ENCODE measurements at regions of chr19 and their contacts with region 1.

Region 1: GRCh38 chr19:19145684-19146608 is 7.7 kb upstream of the TMEM161A start:
- DNase-seq: peak; percentile 75 to 90
- H3K4me3 ChIP-seq: no peak overlapping the region
- H3K4me3 Mint-ChIP-seq: no peak overlapping the region
- H3K27ac Mint-ChIP-seq: no peak overlapping the region
- H3K4me1 ChIP-seq: no peaks in the 10 kb centered on the region
- H3K4me1 Mint-ChIP-seq: no peaks in the 10 kb centered on the region
- H3K27me3 ChIP-seq: no peaks in the 10 kb centered on the region
- H3K27me3 Mint-ChIP-seq: no peaks in the 10 kb centered on the region
- CTCF ChIP-seq: peak; percentile 93 to 96

Region 2: GRCh38 chr19:19170053-19170872 is 24.3 kb after region 1 on chr19 and contains the start of gene MEF2B:
- CTCF ChIA-PET with region 1: interaction called, 3 read pairs
- POLR2A ChIA-PET with region 1: no interaction called
- intact Hi-C with region 1: loop called (anchors 1 kb)
- DNase-seq: peak; percentile 88 to 91
- H3K4me3 ChIP-seq: peak within 1 kb of the TSS; percentile 27
- H3K4me3 Mint-ChIP-seq: peak within 1 kb of the TSS; percentile 59
- H3K27ac Mint-ChIP-seq: no peak within 1 kb of the TSS
- H3K4me1 ChIP-seq: no peaks in the 10 kb centered on the region; the same call in 1 of the 2 replicates
- H3K4me1 Mint-ChIP-seq: peaks cover 21% of the 10 kb centered on the region
- H3K27me3 ChIP-seq: no peaks in the 10 kb centered on the region
- H3K27me3 Mint-ChIP-seq: peaks cover 3% of the 10 kb centered on the region
- CTCF ChIP-seq: no peak
- total RNA-seq, gene MEF2B: 0.82 and 1.5 TPM in 2 replicates

Region 3: DNA sequence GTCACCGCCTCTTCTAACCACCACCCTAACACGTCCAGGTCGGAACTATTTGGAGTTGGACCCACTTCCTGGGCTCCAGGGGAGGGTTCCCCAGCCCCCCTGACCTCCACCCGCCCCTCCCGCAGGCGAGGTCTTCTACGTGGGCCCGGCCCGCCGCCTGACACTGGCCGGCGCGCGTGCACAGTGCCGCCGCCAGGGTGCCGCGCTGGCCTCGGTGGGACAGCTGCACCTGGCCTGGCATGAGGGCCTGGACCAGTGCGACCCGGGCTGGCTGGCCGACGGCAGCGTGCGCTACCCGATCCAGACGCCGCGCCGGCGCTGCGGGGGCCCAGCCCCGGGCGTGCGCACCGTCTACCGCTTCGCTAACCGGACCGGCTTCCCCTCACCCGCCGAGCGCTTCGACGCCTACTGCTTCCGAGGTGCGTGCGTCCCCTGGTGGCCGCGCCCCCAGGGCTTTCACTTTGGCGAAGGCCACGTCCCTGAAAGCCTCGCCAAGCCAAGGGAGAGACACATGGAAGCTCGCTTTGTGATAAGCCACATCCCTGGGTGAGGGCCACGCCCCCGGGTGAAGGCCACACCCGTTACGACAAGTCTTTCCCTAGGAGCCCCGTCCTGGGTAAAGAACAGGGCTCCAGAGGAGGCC is 79.0 kb after region 1 on chr19:
- CTCF ChIA-PET with region 1: no interaction called
- POLR2A ChIA-PET with region 1: no interaction called
- intact Hi-C with region 1: loop called (anchors 2 kb)
- DNase-seq: peak; percentile 85 to 87
- H3K4me3 ChIP-seq: peak overlapping the region; percentile 40
- H3K4me3 Mint-ChIP-seq: peak overlapping the region; percentile 66
- H3K27ac Mint-ChIP-seq: no peak overlapping the region
- H3K4me1 ChIP-seq: no peaks in the 10 kb centered on the region
- H3K4me1 Mint-ChIP-seq: no peaks in the 10 kb centered on the region
- H3K27me3 ChIP-seq: no peaks in the 10 kb centered on the region
- H3K27me3 Mint-ChIP-seq: peaks cover 12% of the 10 kb centered on the region
- CTCF ChIP-seq: peak in 1 of 2 experiments; percentile 91

Region 4: GRCh38 chr19:19342756-19343322 is 196.9 kb after region 1 on chr19:
- CTCF ChIA-PET with region 1: interaction called, 7 read pairs
- POLR2A ChIA-PET with region 1: no interaction called
- intact Hi-C with region 1: loop called (anchors 1 kb)
- DNase-seq: peak; percentile 69 to 85
- H3K4me3 ChIP-seq: no peak overlapping the region
- H3K4me3 Mint-ChIP-seq: no peak overlapping the region
- H3K27ac Mint-ChIP-seq: no peak overlapping the region
- H3K4me1 ChIP-seq: no peaks in the 10 kb centered on the region
- H3K4me1 Mint-ChIP-seq: no peaks in the 10 kb centered on the region
- H3K27me3 ChIP-seq: no peaks in the 10 kb centered on the region
- H3K27me3 Mint-ChIP-seq: no peaks in the 10 kb centered on the region
- CTCF ChIP-seq: peak; percentile 80 to 87

Region 5: DNA sequence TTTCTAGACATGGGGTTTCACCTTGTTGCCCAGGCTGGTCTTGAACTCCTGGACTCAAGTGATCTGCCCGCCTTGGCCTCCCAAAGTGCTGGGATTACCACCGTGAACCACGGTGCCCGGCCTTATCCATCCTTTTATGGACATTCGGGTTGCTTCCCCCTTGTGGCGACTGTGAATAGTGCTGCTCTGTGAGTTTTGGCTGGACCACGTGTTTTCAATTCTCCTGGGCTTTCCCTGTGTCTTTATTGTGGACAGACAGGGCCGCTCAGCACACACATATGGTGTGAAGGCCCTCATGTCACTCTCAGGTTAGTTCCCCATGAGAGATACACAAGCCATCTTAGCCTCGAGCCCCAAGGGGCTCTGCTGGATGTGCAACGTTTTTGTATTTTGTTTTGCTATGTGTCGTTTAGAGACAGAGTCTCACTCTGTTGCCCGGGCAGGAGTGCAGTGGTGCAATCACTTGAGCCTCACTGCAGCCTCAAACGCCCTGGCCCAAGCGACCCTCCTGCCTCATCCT is 215.2 kb after region 1 on chr19:
- CTCF ChIA-PET with region 1: no interaction called
- POLR2A ChIA-PET with region 1: no interaction called
- intact Hi-C with region 1: loop called (anchors 2 kb)
- DNase-seq: peak; percentile 77 to 82
- H3K4me3 ChIP-seq: no peak overlapping the region
- H3K4me3 Mint-ChIP-seq: no peak overlapping the region
- H3K27ac Mint-ChIP-seq: no peak overlapping the region
- H3K4me1 ChIP-seq: no peaks in the 10 kb centered on the region
- H3K4me1 Mint-ChIP-seq: peaks cover 7% of the 10 kb centered on the region
- H3K27me3 ChIP-seq: no peaks in the 10 kb centered on the region; the same call in 1 of the 2 replicates
- H3K27me3 Mint-ChIP-seq: no peaks in the 10 kb centered on the region
- CTCF ChIP-seq: peak; percentile 69 to 73